Left colon (tissue), 2 donors: ENCODE measurements at regions of chr6 and their contacts with region 1.

Region 1: DNA sequence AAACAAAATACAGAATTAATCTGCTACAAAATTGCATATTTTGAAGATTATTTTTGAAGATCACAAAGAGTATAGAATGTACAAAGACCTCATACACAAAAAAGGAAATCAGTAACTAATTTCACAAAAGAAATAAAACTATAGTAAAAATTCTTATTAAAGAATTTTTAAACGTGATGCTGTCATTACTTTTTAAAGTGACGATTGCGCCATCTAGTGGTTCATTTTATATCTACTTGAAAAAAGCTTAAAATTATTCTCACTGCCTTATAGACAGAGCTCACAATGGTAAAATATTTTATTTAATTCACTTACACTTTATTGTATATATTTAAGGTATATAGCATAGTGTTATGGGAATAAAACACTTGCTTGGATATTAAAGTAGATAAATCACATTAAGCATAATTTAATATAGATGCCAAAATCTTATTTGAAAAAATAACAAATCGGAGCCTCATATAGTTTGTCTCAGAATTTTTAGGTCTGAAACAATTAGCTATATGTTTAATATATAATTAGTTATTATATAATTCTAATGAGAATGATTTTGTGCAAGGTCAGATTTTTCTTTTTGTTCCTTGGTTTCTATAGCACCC is 128.8 kb downstream of the PHF3 start:
- DNase-seq: no peak
- ATAC-seq: peak; percentile 44

Region 2: GRCh38 chr6:63352587-63353285 is 411.7 kb before region 1 on chr6:
- intact Hi-C with region 1: loop called in 1 of 2 experiments (anchors 5 kb)
- DNase-seq: peak in 1 of 2 donors; percentile 17
- ATAC-seq: peak; percentile 87

Region 3: DNA sequence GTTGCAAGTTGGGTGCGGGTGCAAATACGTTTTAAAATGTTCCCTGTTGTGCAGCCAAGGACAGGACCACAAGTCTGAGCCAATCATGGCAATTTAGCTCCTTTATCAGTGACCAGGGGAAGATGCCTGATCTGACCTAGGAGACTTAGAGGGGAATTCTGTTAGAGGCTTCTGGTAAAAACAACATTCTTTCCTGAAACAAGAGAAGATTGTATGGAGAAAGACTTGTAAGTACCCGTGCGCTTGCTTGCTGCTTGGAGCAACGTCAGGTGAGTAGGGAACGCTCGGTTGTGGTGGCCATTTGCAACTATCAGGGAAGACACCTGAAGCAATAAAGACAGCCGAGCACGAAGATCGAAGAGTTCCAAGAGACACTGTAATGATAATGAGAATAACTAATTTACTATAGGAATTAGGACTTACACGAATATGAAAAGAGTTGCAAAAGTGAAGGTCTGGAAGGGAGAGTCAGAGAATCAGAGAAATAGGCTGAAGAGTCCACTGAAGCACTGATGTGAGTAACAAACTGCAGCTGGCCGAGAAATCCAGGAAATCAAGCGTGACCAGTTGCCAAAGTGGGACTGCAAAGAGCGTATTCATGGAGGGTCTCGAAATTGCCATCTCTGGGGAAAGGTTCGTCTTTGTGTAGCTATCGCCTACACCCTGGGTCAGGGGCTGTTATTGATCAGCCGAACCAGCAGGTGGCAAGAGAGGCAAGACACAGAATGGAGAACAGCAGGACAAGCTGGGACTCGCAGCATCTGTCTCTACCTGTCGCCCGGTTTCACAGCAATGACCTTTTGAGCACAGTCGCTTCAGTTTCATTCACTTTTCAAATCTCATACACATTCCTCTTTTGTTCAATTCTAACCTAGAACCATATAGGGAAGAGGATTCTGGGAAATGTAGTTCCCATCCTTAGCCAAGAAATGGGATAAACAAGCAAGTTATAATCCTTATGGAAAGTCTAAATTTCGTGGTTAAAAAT is 166.1 kb before region 1 on chr6:
- intact Hi-C with region 1: loop called (anchors 5 to 10 kb)
- DNase-seq: peak; percentile 73 to 81
- ATAC-seq: peak; percentile 97